ENCODE measurements at regions of chr3 and their contacts with region 1.

Region 1: GRCh38 chr3:172461530-172462138 is 13.4 kb upstream of the GHSR start:
- DNase-seq: peak; percentile 67
- CTCF ChIP-seq: peak; percentile 70

Region 2: DNA sequence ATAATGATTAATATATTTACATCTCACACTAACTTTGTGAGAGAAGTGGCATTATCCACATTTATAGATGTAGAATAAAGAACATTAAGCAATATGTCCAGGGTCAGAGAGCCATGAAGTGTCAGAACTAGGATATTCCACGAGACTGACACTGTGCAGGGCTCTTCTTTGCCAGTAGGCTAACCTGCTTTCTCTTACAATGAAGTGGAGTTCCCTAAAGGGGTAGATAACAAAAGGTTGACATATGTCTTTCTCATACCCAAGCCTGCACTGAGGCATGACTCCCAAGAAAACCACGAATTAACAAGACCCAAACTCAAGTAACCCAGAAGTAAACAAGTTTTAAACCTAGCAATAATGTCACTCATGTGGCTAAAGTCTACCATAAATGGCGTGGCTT is 1243.6 kb before region 1 on chr3:
- CTCF ChIA-PET with region 1: no interaction called
- POLR2A ChIA-PET with region 1: no interaction called
- DNase-seq: no peak
- CTCF ChIP-seq: no peak

Region 3: DNA sequence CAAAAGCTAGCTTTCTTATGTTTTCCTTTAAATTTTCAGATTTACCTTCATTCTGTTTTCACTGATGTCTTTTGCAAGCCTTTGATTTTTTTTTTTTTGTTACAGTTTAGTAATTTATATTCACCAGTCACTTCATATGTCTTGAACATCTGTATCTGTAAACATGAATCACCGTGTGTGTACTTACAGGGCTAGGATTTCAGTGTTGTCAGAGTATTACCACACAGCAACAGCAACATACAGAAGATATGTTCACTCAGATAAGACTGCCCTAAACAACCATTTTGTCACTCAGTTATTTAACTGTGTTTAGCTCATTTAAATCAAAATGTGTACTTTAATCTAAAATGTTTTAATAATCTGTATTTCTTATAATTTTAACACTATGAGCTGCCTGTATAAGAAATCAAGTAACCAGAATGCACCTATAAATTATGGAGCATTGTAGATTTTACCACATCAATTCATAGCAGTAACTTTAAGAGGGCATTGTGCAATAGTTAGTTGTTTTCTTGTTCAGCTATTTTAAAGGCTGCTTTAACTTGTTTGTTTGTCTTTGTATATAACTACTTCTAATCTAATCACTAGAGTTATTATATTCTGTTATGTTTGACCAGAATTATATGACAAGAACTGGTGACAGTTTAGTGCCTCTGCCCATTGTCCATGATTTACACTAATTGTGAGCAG is 63.8 kb before region 1 on chr3:
- CTCF ChIA-PET with region 1: interaction called, 10 read pairs
- POLR2A ChIA-PET with region 1: no interaction called
- DNase-seq: no peak
- CTCF ChIP-seq: no peak

Region 4: DNA sequence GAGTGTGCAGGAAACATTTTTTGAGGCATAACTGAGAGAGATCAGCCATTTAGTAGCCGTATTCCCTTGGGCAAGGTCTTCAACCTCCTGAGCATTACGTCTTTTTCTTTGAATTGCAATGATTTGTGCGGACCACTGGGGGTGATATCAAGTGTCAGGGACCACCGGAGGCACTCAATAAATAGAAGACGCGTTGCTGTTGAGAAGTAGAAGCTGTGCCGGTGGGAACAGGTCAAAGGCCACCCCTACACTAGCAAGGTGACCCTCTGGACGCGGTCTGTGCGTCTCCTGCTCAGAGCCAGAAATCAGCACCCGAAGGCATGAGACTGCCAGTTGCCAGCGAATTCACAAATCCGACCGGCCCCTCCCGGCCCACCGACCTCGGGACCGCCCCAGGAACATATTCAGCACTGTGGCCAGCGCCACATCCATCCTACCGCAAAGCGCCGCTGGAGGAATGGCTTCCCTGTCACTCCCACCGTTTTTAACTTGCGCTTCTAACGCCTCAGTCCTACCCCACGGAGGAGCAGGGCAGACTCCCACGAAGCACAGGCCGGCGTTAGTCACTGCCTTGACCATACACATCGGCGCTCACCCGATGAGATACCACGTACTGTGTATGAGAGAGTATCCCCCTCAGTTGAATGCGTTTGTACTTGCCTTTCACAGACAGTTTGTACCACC is 12.0 kb before region 1 on chr3:
- CTCF ChIA-PET with region 1: interaction called, 14 read pairs
- POLR2A ChIA-PET with region 1: no interaction called
- DNase-seq: peak; percentile 13
- CTCF ChIP-seq: no peak

Region 5: DNA sequence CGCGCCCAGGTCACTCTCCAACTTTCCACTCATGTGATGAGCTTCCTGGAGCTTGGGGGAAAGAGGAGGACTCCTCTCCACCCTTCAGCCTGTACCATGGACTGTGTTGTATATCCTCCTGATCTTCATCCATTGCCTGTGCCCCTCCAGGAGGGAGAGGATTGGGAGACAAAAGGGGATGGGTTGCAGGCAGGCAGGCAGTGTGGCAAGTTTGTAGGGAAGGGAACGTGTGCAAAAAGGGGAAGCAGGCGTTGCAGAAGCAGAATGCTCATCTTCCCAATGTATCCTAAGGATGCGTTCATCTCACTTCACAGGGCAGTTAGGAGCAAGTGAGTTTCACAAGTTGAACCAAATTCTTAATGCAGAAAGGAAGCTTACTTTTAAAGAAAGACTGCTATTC is 14.7 kb after region 1 on chr3:
- CTCF ChIA-PET with region 1: interaction called, 18 read pairs
- POLR2A ChIA-PET with region 1: no interaction called
- DNase-seq: no peak
- CTCF ChIP-seq: no peak

Region 6: DNA sequence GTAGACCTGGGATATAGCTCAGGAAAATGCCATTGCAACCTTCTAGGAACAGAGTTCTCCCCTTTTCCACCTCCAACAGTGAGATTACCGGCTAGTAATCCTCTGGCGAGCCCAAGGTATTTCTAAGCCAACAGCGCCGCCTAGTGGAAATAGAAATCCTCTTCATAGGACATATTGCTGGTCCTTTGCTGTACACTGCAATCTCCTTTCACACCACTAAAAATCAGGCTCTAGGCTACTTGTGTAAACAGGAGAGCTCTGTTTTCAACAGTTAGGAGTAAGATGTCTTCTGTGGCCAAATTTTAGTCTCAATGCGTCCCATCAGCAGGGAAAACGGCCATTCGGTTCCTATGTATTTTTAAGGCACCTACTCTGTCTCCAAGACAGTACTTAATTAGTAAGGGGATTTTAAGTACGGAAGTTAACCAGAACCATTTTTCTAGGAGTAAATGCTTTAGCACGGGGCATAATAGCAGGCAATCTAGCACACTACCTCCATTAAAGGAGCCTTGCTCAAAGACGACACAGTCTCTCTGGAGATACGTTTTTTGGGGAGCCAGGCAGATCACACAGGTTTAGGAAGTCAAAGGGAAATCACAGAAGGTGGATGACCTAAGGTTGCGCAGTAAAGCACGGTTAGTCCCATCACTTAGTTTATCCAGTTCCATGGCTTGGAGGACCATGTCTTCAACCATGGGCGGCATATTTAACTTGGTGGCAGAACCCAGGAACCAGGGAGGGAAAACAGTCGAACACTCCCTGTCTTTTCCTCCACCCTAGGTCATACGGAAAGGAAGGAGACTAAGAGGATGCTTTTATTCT is 205.4 kb after region 1 on chr3:
- CTCF ChIA-PET with region 1: interaction called, 13 read pairs
- POLR2A ChIA-PET with region 1: no interaction called
- DNase-seq: peak; percentile 65
- CTCF ChIP-seq: peak; percentile 75